ENCODE measurements at regions of chr2 and their contacts with region 1.

Region 1: DNA sequence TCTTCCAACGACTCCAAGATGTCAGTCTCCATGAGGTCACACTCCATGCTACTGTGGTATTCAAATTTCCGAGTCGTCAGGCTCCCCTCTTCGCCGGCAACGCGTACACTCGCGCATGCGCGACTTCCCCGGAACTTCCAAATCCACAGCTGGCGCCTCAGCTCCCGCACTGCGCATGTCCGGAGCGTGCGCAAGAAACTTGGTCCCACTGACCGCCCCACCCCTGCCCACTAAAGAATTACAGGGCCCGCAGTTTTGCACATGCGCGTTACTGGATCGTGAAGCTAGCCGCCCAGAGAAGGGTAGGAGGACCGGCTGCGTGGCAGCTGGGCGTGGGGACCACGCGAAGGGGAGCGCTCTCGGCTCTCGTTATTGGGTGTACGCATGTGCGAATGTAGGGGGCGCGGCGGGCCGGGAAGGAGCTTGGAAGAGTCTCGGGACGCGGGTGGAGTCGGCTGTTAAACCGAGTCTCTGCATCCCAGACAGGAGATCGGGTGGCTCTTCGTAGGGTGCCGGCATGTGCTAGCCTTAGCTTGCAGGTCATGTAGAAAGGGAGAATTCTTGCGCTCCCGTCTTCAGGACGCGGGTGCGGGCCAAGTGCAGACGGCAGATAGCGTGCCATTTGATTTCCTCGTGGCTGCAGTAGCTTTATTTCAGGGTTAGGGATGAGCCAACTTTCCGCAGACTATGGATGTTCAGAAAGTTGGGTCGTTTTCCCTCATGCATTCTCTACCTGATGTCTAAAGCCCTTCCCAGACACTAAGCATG is at the start of gene FAM98A:
- DNase-seq: peak; percentile 99
- H3K4me3 ChIP-seq: peak within 1 kb of the TSS; percentile 78
- H3K4me3 Mint-ChIP-seq: peak within 1 kb of the TSS; percentile 95
- H3K27ac Mint-ChIP-seq: peak within 1 kb of the TSS; percentile 95
- H3K4me1 ChIP-seq: peaks cover 5% of the 10 kb centered on the region; the same call in 1 of the 2 replicates
- H3K4me1 Mint-ChIP-seq: peaks cover 7% of the 10 kb centered on the region
- H3K27me3 ChIP-seq: no peaks in the 10 kb centered on the region
- H3K27me3 Mint-ChIP-seq: no peaks in the 10 kb centered on the region
- CTCF ChIP-seq: peak in 1 of 2 experiments; percentile 27
- total RNA-seq, gene FAM98A: 53.9 and 60.7 TPM in 2 replicates

Region 2: DNA sequence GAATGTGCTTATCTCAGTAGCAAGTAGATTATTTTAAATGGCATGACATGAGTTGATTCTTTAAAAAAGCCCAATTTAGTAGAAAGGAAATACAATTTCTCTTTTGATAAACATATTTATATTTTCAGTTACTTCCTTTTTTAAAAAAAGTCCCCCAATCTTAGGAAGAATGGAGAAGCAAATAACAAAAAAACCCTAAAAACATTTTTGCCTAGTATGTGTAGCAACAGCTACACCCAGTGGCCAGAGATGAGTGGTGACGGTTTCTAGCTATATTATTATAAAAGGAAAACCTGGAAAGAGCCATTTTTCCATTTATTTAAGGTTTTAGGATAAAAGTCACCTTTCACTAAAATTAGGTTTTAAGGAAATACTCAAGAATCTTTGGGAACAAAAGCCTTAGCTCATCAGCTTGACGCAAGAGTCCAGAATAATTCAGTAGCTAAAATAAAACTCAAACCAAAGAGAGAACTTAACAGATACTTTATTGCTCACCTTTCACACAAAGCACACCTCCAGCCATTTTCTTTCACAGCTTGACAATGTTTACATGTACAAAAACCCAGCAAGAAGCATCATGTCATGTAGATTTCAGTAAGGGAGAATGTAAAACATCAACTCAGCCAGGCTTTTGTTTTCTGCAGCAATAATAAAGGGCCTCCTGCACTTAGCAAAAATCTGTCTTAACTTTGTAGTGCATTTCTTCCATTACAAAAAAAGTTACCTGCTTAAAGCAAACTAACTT is 16.0 kb before region 1 on chr2:
- CTCF ChIA-PET with region 1: interaction called, 13 read pairs
- POLR2A ChIA-PET with region 1: interaction called, 3 read pairs
- intact Hi-C with region 1: no loop called
- DNase-seq: peak in 1 of 2 experiments; percentile 44
- H3K4me3 ChIP-seq: no peak overlapping the region
- H3K4me3 Mint-ChIP-seq: no peak overlapping the region
- H3K27ac Mint-ChIP-seq: no peak overlapping the region
- H3K4me1 ChIP-seq: no peaks in the 10 kb centered on the region
- H3K4me1 Mint-ChIP-seq: no peaks in the 10 kb centered on the region
- H3K27me3 ChIP-seq: no peaks in the 10 kb centered on the region
- H3K27me3 Mint-ChIP-seq: no peaks in the 10 kb centered on the region
- CTCF ChIP-seq: peak; percentile 83 to 85

Region 3: DNA sequence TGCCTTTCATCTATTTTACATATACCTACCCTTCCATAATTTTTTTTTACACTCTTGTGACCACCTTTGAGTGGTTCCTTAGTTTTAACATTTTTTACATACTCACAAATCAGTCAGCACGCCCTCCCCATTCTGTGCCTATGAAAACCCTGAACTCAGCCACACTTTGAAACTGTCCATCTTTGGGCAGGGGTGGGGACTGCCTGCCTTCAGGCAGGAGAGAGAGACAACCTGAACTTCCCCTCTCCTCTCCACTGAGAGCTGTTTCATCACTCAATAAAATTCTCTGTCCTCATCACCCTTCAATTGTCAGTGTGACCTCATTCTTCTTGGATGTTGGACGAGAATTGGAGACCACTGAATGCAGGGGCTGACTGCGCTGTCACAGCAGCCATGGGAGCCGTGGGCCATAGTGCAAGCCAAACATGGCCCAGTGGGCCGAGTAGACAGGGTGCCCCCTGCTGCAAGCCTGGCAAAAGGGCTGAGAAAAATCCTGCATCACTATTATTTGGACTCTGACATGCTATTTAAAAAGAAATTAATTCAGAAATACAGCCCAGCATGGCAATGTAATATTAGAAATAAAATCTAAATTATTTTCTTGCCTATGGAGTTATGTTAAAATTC is 67.4 kb after region 1 on chr2:
- CTCF ChIA-PET with region 1: no interaction called
- POLR2A ChIA-PET with region 1: no interaction called
- intact Hi-C with region 1: loop called (anchors 1 kb)
- DNase-seq: no peak
- H3K4me3 ChIP-seq: no peak overlapping the region
- H3K4me3 Mint-ChIP-seq: no peak overlapping the region
- H3K27ac Mint-ChIP-seq: no peak overlapping the region
- H3K4me1 ChIP-seq: no peaks in the 10 kb centered on the region
- H3K4me1 Mint-ChIP-seq: no peaks in the 10 kb centered on the region
- H3K27me3 ChIP-seq: no peaks in the 10 kb centered on the region
- H3K27me3 Mint-ChIP-seq: peaks cover 4% of the 10 kb centered on the region
- CTCF ChIP-seq: no peak

Region 4: GRCh38 chr2:33696234-33696633 is 96.9 kb after region 1 on chr2:
- CTCF ChIA-PET with region 1: no interaction called
- POLR2A ChIA-PET with region 1: no interaction called
- intact Hi-C with region 1: no loop called
- DNase-seq: no peak
- H3K4me3 ChIP-seq: no peak overlapping the region
- H3K4me3 Mint-ChIP-seq: no peak overlapping the region
- H3K27ac Mint-ChIP-seq: no peak overlapping the region
- H3K4me1 ChIP-seq: no peaks in the 10 kb centered on the region
- H3K4me1 Mint-ChIP-seq: no peaks in the 10 kb centered on the region
- H3K27me3 ChIP-seq: no peaks in the 10 kb centered on the region
- H3K27me3 Mint-ChIP-seq: peaks cover 17% of the 10 kb centered on the region
- CTCF ChIP-seq: no peak

Region 5: DNA sequence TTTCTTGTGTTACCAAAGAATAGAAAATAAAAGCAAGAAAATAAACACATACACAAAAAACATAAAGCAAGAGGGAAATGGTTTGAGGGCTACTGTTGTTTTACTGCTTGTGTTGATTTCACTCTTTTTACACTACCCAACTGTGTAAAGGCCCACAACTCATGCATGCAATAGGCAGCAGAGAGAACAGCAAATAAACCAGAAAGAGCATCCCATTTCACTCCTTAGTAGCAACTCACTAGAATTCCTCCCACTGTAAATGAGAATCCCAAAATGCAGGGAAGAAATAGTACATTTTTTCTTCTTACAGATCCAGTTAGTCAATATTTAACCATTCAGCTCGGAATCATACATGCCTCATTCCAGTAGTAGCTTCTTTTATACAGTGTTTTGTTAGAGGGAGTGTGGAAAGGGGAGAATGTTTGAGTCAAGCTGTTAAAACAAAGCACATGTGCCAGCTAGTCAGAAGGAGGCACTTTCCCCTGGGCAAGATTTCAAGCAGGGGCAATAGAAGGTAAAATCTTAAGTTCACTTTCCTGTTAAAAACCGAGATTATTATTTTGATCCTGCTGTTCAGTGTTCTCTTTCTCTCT is 146.9 kb after region 1 on chr2:
- CTCF ChIA-PET with region 1: no interaction called
- POLR2A ChIA-PET with region 1: no interaction called
- intact Hi-C with region 1: no loop called
- DNase-seq: no peak
- H3K4me3 ChIP-seq: no peak overlapping the region
- H3K4me3 Mint-ChIP-seq: no peak overlapping the region
- H3K27ac Mint-ChIP-seq: no peak overlapping the region
- H3K4me1 ChIP-seq: no peaks in the 10 kb centered on the region
- H3K4me1 Mint-ChIP-seq: no peaks in the 10 kb centered on the region
- H3K27me3 ChIP-seq: no peaks in the 10 kb centered on the region
- H3K27me3 Mint-ChIP-seq: no peaks in the 10 kb centered on the region
- CTCF ChIP-seq: no peak